ENCODE measurements at regions of chr2 and their contacts with region 1.

Region 1: GRCh38 chr2:8681786-8682692 is at the start of gene ID2:
- DNase-seq: peak; percentile 98
- H3K4me3 Mint-ChIP-seq: peak within 1 kb of the TSS; percentile 96
- H3K27ac Mint-ChIP-seq: peak within 1 kb of the TSS; percentile 91
- H3K4me1 Mint-ChIP-seq: peaks cover 31% of the 10 kb centered on the region
- H3K27me3 Mint-ChIP-seq: peaks cover 18% of the 10 kb centered on the region
- total RNA-seq, gene ID2: 73.9 to 81.9 TPM

Region 2: DNA sequence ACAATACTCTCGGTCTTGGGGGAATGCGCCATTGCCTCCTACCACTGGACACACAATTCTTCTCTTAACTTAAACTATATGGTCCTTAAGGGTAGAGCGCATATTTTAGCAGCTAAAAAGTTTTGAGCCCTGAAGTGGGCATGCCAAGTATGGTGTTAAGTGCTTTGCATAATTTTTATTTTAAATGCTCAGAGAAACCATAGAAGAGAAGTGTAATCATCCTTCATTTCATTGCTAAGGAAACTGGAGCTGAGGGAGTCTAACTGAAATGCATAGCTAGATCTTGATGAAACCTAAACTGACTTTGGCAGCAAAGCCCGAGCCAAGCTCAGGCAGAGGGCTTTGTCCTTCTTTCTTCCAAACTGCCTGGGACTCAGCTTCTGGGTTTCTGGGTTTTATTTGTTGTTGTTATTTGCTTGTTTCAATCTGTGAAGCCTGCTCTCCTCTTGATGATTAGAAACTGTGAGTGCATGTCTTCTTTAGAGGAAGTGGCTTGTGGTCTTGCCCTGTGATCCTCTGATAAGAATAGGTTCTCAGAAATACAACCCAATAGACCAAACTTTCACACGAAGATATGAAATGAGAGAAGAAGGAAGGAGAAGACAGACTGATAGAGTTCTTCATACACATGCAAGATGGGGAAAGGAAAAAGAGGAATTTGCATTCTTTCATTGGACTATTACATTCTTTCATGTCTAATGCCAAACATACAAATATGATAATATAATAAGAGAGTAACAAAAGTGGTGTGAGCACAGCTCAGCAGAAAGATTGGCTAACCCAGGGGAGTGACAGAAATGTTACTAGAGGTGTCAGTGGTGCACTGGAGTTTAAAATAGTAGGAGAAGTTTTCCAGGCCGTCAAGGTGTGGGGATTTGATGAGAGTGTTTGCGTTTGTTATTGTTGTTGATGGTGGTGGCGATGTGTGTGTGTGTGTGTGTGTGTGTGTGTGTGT is 1772.3 kb before region 1 on chr2:
- CTCF ChIA-PET with region 1: no interaction called
- intact Hi-C with region 1: loop called (anchors 5 kb)
- DNase-seq: peak; percentile 64
- H3K4me3 Mint-ChIP-seq: peak overlapping the region; percentile 65
- H3K27ac Mint-ChIP-seq: peak overlapping the region; percentile 100
- H3K4me1 Mint-ChIP-seq: peaks cover 89% of the 10 kb centered on the region
- H3K27me3 Mint-ChIP-seq: no peaks in the 10 kb centered on the region

Region 3: GRCh38 chr2:7427293-7428060 is 1254.6 kb before region 1 on chr2:
- CTCF ChIA-PET with region 1: interaction called, 5 read pairs
- intact Hi-C with region 1: loop called (anchors 1 kb)
- DNase-seq: no peak
- H3K4me3 Mint-ChIP-seq: no peak overlapping the region
- H3K27ac Mint-ChIP-seq: no peak overlapping the region
- H3K4me1 Mint-ChIP-seq: peaks cover 31% of the 10 kb centered on the region
- H3K27me3 Mint-ChIP-seq: peaks cover 3% of the 10 kb centered on the region

Region 4: DNA sequence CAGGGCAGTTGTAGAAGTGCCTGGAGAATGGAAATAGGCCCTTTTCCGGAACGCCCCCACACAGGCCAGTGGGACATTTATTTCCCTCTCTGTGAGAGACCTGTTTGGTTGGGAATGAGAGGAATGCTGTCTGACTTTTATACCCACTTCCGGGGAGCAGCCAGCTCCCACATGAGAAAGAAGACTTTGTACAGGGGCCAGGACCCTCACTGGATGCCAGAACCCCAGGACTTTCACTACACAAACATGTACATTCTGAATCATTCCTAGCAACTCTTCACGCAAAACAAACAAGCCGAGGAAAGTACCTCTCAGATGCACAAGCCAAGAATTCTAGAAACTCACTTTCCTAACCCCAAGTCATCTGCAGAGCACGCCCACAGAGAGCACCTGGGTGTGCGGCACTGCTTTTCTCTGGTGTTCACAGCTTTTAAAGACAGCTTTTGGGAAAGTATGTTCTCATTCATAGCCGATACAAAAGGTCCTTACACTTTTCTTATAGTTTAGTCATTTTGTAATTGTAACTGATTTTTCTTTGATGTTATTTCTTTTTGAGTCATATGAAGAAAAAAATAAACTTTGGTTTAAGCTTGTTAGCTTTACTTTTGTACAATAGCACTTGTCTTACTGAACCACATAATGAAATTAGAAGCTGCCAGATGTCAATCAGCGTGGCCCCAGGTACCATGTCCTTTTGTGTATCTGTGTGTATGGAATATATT is 856.3 kb before region 1 on chr2:
- CTCF ChIA-PET with region 1: no interaction called
- intact Hi-C with region 1: loop called (anchors 1 kb)
- DNase-seq: peak; percentile 86
- H3K4me3 Mint-ChIP-seq: no peak overlapping the region
- H3K27ac Mint-ChIP-seq: peak overlapping the region; percentile 86
- H3K4me1 Mint-ChIP-seq: peaks cover 16% of the 10 kb centered on the region
- H3K27me3 Mint-ChIP-seq: no peaks in the 10 kb centered on the region

Region 5: DNA sequence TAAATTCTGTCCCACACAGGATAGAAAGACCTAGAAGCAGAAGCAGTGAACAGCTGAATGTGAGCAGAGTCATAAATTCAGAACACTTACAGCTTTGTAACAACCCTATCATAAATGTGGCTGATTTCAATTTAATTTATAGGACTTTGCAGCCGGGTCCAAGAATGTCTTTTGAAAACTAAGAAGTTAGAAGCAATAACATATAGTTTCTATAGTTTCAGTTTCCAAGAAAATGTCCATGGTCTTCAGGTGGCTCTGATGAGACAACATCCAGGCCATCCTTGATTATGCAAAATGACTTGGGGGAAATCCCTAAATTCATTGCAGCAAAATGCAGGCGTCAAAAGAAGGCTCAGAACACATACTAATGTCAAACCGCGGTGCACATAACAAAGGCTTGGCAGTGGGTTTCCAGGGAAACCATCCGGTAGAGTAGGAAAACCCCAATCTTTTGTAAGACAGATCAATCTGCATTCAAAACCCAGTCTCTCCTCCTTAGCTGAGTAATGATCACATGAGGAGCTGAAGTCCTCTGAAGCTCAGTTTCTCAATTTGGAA is 442.4 kb before region 1 on chr2:
- CTCF ChIA-PET with region 1: no interaction called
- intact Hi-C with region 1: loop called (anchors 1 kb)
- DNase-seq: peak; percentile 75
- H3K4me3 Mint-ChIP-seq: no peak overlapping the region
- H3K27ac Mint-ChIP-seq: no peak overlapping the region
- H3K4me1 Mint-ChIP-seq: peaks cover 18% of the 10 kb centered on the region
- H3K27me3 Mint-ChIP-seq: peaks cover 22% of the 10 kb centered on the region

Region 6: DNA sequence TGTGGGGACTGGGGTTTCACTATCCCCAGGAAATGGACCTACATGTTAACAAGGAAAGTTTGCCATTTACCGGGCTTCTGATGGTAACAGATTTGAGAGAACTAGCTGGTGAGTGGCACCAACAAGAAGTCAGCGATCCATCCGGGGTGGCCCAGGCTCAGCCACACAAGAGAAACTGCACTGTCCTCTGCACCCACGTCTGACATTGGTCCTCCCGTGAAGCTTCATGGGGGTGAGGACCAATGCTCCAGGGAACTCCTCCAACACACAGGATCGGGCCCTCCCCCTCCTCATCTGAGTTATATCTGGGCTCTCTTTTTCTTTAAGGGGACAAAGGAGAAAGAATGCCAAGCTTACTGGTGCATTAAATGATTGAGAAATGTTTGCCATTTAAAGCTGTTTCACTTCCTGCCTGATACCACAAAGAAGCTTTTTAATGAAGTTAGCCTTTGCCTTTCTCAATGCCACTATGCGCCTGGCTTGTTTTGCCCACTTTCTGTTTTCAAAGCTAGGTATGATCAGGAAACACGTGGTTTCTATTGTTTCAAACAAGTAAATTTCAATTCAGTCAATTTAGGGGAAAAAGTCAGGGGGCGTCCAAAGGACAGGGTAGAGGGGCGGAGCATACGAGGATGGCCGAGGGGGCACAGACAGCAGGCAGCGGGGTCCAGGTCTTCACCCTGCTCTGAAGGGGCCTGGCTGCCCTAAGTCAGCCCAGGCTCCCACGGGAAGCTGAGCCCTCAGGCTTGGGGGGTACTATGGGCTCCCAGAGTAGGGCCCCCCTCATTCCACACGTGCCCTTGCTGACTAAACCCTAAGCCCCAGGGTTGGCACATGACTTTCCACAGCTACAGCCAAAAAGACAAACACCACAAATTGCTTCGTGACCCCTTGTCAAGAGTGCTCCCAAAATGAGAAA is 204.2 kb before region 1 on chr2:
- CTCF ChIA-PET with region 1: no interaction called
- intact Hi-C with region 1: loop called (anchors 2 kb)
- DNase-seq: peak; percentile 54
- H3K4me3 Mint-ChIP-seq: no peak overlapping the region
- H3K27ac Mint-ChIP-seq: peak overlapping the region; percentile 31
- H3K4me1 Mint-ChIP-seq: peaks cover 65% of the 10 kb centered on the region
- H3K27me3 Mint-ChIP-seq: no peaks in the 10 kb centered on the region

Region 7: DNA sequence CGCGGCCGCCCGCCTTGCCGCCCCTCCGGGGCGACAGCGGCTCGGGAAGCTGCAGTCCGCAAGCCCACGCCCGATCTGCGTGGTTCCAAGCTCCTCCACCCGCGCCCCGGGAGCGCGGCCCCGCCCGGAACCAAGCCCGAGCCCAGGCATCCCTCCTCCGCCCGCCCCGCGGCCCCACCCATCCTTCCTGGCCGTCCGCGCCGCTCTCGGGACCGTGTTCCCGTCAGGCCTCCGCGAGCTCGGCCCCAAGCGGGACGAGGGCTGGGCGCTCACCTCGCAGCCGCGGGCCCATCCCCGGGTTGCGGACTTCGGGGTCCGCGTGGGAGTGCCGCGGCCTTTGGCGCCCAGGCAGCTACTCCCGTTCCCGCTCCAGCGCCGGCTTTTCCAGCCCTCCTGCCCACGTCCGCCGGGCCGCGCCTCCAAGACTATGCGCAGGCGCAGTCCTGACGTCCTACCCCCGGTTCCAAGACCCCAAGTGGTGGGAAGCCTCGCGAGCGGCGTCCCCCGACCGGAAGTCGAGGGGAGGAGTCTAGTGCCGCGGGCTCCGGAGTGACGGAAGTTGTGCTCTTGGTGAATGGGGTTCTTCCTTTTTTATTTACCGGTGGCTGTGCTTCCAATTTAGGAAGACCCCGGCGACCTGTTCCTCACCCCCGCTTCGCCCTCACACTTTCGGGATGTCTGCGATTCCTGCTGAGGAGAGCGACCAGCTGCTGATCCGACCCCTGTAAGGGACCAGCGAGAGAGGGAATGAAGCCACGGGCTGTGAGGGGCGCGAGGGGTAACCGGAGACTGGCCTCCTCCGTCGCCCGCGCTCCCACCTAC is 741.3 kb after region 1 on chr2 and contains the starts of genes CPSF3 and ITGB1BP1:
- CTCF ChIA-PET with region 1: no interaction called
- intact Hi-C with region 1: loop called (anchors 5 kb)
- DNase-seq: peak; percentile 97
- H3K4me3 Mint-ChIP-seq: no peak within 1 kb of the TSS
- H3K27ac Mint-ChIP-seq: peak within 1 kb of the TSS; percentile 92
- H3K4me1 Mint-ChIP-seq: peaks cover 39% of the 10 kb centered on the region
- H3K27me3 Mint-ChIP-seq: no peaks in the 10 kb centered on the region
- total RNA-seq, gene CPSF3: 64.5 to 65.7 TPM
- total RNA-seq, gene ITGB1BP1: 97.2 to 97.4 TPM